Activated T-helper 2 cell treated with anti-CD3 and anti-CD28 coated beads, Interferon-gamma antibody, Interleukin-2, Interleukin-4, amounts not matched to agents 10 μg/mL and 5 μg/mL and 100 μg/mL, durations not matched to agents 14 hours and 24 hours and 36 hours (primary cell): ENCODE measurements at regions of chr9 and their contacts with region 1.

Region 1: DNA sequence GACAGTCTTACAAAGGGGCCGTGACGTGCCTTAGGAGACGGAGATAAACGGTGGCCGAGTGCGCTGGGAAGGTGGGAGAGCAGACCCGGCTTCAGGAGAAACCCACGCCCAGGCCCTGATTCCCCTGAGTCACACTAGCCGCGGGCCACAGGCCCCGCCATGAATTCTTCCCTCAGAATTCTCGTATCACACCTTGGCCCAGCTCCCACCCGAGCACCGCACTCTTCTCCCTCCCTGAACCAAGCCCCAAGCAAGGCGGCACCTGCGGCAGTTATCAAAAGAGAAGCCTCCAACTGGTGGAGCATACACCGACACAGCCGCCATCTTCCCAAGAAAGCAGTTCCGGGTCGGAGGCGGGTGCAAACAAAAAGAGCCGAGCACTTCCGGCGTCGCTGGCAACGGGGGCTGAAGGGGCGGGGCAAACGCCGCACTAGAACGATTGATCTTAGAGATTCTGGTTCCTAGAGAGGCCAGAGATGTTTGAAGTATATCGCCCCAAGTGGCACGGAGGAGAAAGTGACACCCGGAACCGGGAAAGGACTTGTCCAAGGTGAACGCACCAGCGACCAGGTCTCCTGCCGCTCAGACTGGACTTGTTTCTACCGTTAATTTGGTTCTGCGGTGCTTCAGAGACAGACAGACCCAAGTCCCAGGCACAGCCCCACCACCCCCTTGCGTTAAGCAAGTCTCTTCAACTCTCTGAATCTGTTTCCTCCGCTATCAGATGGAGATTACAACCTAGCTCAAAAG is at the start of gene PSMB7:
- DNase-seq: peak; percentile 95
- H3K4me3 Mint-ChIP-seq: peak within 1 kb of the TSS; percentile 98
- H3K27ac Mint-ChIP-seq: peak within 1 kb of the TSS; percentile 96
- H3K4me1 Mint-ChIP-seq: peaks cover 34% of the 10 kb centered on the region
- H3K27me3 Mint-ChIP-seq: no peaks in the 10 kb centered on the region
- total RNA-seq, gene PSMB7: 205 and 211 TPM in 2 replicates

Region 2: GRCh38 chr9:124392871-124393460 is 22.3 kb before region 1 on chr9:
- intact Hi-C with region 1: loop called (anchors 2 kb)
- DNase-seq: no peak
- H3K4me3 Mint-ChIP-seq: no peak overlapping the region
- H3K27ac Mint-ChIP-seq: no peak overlapping the region
- H3K4me1 Mint-ChIP-seq: peaks cover 31% of the 10 kb centered on the region
- H3K27me3 Mint-ChIP-seq: no peaks in the 10 kb centered on the region

Region 3: GRCh38 chr9:124537926-124538325 is 122.6 kb after region 1 on chr9:
- intact Hi-C with region 1: loop called (anchors 2 kb)
- DNase-seq: no peak
- H3K4me3 Mint-ChIP-seq: no peak overlapping the region
- H3K27ac Mint-ChIP-seq: no peak overlapping the region
- H3K4me1 Mint-ChIP-seq: no peaks in the 10 kb centered on the region
- H3K27me3 Mint-ChIP-seq: peaks cover 8% of the 10 kb centered on the region